ENCODE measurements at regions of chr6 and their contacts with region 1.

Region 1: DNA sequence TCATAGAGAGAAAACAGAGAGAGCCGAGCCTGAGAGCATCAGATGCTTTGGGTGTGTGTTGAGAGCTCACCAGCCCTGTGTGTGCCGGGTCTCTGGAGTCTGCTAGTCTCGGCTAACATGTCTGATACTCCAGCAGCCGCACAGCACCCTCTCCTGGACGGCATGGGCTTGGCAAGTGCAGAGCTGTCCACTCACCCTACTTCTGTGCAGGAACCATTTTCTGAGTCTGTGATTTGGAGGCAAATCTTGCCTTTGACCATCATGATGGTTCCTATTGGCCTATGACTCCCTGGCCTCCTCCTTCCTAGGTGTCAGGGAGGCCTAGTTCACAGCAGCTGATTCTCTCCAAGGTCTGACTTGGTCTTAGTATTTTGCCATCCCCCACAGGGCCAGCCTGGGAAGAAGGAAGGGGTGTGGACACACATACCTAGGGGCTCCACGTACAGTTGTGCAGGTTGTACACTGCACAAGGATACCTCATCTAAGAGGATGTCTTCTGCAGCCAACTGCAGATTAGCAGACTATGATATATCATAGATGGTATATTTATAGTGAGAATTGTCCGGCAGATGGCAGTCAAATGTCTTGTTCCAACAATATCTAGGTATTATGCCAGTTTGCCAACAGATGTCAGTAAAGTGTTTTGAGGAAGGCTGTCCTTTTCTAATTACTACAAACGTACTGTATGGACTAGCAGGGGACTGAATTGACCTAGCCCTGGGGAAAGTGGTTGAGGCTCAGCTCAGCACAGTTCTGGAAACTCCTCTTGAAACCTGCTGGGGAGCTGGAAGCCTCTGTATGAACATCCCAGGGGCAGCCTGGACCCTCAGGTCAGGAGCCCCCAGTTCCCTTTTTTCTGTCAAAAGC is 13.0 kb downstream of the FGD2 start:
- DNase-seq: peak; percentile 74
- H3K4me3 ChIP-seq: no peak overlapping the region
- H3K27ac ChIP-seq: no peak overlapping the region
- H3K4me1 ChIP-seq: peaks cover 37% of the 10 kb centered on the region
- H3K27me3 ChIP-seq: no peaks in the 10 kb centered on the region
- CTCF ChIP-seq: peak; percentile 93 to 97

Region 2: DNA sequence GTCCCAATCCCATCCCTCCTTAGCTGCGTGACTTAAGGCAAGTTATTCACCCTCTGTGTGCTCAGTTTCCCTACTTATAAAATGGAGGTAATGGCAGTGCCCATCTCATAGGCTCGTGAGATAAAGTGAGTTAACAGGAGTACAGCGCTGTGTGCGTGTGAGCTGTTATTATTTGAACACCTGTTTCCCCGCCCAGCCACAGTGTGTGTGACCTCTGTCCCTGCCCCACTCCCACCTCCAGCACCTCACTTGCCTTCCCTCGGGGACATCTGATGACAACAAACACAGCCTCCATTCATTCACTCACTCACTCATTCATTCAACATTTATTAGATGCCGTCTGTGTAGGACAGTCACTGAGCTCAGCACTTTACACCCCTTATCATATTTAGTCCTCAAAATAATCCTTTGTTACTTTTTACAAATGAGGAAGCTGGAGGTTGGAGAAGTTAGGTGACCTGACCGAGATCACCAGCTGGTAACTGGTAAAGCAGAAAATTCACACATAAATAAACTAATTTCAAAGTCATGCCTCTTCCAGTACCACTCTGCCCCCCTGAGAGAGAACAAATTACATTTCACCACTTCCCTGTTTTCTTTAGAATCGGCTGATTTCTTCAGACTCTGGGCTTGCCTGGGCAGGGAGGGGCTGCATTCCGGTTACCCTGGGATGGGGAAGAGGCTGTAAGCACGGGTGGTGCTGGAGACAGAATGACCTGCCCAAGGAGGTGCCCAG is 237.8 kb before region 1 on chr6:
- CTCF ChIA-PET with region 1: interaction called, 14 read pairs
- dilution Hi-C with region 1: no loop called
- in situ Hi-C with region 1: no loop called
- intact Hi-C with region 1: no loop called
- DNase-seq: peak; percentile 11
- H3K4me3 ChIP-seq: no peak overlapping the region
- H3K27ac ChIP-seq: no peak overlapping the region
- H3K4me1 ChIP-seq: peaks cover 10% of the 10 kb centered on the region
- H3K27me3 ChIP-seq: no peaks in the 10 kb centered on the region
- CTCF ChIP-seq: no peak

Region 3: DNA sequence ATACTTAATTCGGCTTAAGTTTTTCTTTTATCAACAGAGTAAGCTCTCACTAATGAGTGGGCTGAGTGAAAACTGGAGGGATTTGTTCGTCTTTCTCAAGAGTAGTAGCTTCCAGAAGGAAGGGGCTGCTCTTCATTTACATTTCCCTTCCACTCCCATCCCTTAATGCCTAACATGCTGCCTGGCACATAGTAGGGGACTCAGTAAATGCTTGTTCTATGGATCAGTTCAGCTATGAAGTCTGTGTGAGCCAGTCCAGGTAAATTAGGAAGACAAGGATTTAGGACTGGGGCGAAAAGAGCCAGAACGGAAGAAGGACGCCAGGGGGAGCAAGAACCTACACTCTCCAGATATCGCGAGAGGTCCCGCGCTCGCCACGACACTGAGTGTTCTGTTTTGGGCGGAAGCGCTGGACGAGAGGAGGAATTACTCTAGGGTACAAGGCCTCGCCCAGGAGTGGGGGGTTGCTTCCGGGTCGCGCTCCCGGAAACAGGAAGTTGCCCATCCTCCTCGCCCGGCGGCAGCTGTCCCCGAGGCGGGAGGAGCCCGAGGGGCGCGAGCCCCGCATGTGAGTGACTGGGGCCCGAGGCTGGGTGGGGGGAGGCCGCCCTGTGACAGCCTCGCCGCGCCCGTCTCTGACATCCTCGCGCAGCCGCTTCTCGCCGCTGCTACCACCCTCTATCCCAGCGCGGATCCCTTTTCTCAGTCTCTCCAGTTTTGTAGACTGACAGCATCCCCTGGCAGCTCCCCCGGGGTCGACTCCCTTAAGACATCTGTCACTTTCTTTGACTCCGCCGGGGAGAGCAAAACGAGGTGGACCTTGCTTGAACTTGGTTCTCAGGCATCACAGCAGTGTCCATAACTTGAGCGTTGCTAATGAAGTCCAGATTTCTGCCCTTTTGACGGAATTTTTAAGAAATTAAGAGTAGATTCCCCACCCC is 132.7 kb before region 1 on chr6 and contains the start of gene C6orf89:
- CTCF ChIA-PET with region 1: interaction called, 10 read pairs
- dilution Hi-C with region 1: no loop called
- in situ Hi-C with region 1: no loop called
- intact Hi-C with region 1: loop called (anchors 1 kb)
- DNase-seq: peak; percentile 93
- H3K4me3 ChIP-seq: peak within 1 kb of the TSS; percentile 53 to 70 (median 64)
- H3K27ac ChIP-seq: peak within 1 kb of the TSS; percentile 57
- H3K4me1 ChIP-seq: peaks cover 10% of the 10 kb centered on the region
- H3K27me3 ChIP-seq: no peaks in the 10 kb centered on the region
- CTCF ChIP-seq: peak; percentile 68 to 89
- total RNA-seq, gene C6orf89: 34.3 to 42.2 TPM

Region 4: DNA sequence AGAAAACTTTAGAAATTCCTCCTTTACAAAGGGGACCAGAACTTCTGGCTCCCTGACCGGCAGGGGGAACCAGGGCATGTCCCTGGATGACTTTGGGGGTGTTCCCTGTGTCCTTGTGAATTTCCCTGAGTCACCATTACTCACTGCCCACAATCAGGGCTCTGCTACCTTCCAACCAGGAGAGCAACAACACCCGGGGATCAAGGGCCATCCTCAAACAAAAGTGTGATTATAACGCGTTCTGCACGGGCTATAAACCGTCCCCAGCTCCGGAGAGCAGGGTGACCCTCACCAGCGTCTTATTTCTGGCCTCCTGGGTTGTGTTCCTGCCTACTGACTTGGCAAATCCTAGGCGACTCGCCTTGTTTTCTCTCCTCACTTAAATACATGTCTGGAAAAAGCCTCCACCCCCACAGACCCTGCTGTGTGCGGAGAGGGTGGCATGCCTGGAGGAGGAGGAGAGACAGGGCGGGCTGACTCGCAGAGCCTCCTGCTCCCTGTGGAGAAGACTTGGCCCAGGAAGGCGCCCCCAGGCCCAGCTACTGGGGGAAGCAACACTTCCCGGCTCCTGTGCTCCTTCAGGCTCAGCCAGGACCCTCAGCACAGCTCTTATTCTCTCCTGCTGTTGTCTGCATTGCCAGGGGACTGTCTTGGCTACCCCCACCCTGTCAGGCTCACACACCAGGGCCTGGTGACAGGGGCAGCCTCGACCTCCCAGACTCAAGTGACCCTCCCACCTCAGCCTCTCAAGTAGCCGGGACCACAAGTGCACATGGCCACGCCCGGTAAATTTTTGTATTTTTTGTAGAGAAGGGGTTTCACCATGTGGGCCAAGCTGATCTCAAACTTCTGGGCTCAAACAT is 41.1 kb after region 1 on chr6:
- CTCF ChIA-PET with region 1: interaction called, 3 read pairs
- dilution Hi-C with region 1: no loop called
- in situ Hi-C with region 1: loop called in 1 of 2 experiments (anchors 5 kb)
- intact Hi-C with region 1: loop called (anchors 2 kb)
- DNase-seq: peak; percentile 98
- H3K4me3 ChIP-seq: peak overlapping the region in 2 of 3 experiments; percentile 16 to 27
- H3K27ac ChIP-seq: peak overlapping the region; percentile 83
- H3K4me1 ChIP-seq: peaks cover 51% of the 10 kb centered on the region
- H3K27me3 ChIP-seq: no peaks in the 10 kb centered on the region
- CTCF ChIP-seq: peak; percentile 64 to 87

Region 5: DNA sequence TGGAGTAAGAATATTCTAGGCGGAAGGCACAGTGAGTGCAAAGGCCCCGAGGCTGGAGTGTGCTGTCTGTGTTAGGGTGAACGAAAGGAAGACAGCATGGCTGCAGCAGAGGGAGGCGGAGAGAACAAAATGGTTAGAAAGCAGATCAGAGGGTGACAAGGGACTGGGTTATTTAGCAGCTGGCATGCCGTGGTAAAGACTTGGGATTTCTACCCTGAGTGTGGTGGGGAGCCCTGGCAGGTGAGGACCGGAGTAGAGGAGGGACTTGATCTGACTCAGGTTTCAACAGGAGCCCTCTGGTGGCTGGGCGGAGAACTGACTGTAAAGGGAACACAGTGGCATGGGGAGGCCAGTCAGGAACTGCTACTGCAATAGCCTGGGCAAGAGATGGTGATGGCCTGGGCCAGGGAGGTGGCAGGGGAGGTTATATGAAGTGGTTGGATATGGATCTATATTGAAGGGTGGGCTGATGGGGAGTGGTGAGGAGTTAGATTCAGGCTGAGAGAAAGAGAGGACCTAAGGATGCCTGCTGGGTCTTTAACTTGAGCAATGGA is 189.5 kb after region 1 on chr6:
- CTCF ChIA-PET with region 1: interaction called, 8 read pairs
- dilution Hi-C with region 1: no loop called
- in situ Hi-C with region 1: loop called (anchors 5 kb)
- intact Hi-C with region 1: loop called (anchors 1 kb)
- DNase-seq: peak; percentile 77
- H3K4me3 ChIP-seq: no peak overlapping the region
- H3K27ac ChIP-seq: no peak overlapping the region
- H3K4me1 ChIP-seq: peaks cover 7% of the 10 kb centered on the region
- H3K27me3 ChIP-seq: no peaks in the 10 kb centered on the region
- CTCF ChIP-seq: peak; percentile 86 to 91

Region 6: DNA sequence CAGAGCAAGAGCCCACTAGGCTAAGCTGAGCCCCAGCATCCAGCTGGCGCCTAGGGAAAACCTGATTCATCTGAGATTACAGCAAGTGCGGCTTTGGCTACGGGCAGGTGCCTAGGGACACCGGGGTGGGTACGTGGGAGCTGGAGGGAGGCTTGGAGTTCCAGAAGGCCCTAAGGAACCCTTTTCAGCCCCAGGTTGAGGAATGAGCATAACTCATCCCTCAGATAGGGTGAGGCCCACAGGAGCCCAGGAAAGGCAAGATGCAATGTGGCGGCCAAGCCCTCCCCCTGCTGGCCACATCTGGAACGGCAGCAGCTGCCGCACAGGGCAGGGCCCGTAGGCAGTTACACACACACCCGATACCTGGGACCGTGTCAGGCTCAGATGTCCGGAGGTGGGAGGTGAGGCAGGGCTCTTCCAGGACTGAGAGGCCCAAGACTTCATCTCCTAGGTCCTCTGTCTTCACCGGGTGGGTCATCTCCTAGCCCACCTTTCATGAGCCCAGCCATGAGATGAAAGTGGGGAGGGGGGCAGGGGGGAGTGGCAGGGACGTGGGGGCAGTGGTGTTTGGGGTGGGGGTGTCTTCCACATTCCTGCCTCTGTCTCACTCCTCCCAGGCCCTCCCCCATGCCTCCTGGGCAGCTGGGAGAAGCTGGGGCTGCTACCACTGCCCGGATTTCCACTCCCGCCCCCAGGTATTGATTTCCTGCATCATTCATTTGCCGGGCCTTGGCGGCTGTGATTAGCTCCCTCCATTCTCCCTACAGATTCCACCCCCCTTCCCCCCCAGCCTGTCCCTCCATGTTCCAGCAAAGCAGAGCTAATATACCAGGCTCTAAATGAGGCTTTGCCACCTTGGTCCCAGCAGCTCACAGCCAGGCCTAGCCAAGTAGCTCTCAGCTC is 673.7 kb after region 1 on chr6:
- CTCF ChIA-PET with region 1: no interaction called
- dilution Hi-C with region 1: no loop called
- in situ Hi-C with region 1: no loop called
- intact Hi-C with region 1: loop called (anchors 5 kb)
- DNase-seq: peak; percentile 70
- H3K4me3 ChIP-seq: no peak overlapping the region
- H3K27ac ChIP-seq: no peak overlapping the region
- H3K4me1 ChIP-seq: peaks cover 25% of the 10 kb centered on the region
- H3K27me3 ChIP-seq: no peaks in the 10 kb centered on the region
- CTCF ChIP-seq: peak; percentile 97 to 98